SK-N-SH (cell line): ENCODE measurements at regions of chr7 and their contacts with region 1.

Region 1: DNA sequence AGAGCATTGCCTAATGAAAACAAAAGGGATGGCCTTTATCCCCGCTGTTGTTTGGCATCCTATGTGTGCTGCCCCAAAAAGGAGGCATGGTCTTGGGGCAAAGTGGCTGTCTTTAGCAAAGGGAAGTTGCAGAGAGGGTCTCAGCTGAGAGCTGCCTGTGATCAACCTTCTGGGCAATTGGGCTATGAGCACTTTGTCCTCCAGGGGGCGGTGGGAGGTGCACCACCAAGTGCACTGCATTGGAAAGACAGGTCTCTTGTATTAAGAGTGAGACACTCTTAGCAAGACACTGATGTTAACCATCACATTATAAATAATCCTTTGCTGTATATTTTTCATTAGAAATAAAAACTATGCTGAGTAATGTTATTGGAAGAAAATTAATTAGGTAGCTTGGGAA is 314.8 kb downstream of the POM121L12 start:
- DNase-seq: peak; percentile 38
- H3K4me3 ChIP-seq: no peak overlapping the region
- H3K27ac ChIP-seq: no peak overlapping the region
- H3K4me1 ChIP-seq: no peaks in the 10 kb centered on the region; a peak in 2 of 4 replicates
- H3K27me3 ChIP-seq: no peaks in the 10 kb centered on the region
- CTCF ChIP-seq: peak; percentile 38
- EP300 ChIP-seq: no peak
- RAD21 ChIP-seq: peak; percentile 81

Region 2: DNA sequence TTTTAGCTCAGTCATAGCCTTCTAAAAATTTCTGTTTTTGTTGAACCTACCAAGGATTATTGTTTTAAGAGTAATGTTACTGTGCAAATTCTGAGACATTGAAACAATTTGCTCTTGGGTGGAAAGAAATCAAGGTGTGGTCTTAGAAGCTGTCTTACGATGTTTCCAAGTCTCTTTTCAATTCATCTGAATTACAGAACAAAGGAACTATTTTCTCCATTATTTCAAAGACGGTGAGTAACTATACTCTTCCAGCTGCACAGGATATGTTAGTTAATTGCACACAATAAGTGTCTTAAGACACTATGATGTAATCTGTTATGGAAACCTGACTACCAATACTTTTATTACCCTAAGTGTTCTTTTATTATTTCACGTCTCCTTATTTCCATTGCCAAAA is 421.6 kb before region 1 on chr7:
- CTCF ChIA-PET with region 1: no interaction called
- POLR2A ChIA-PET with region 1: no interaction called
- DNase-seq: no peak
- H3K4me3 ChIP-seq: no peak overlapping the region
- H3K27ac ChIP-seq: no peak overlapping the region
- H3K4me1 ChIP-seq: no peaks in the 10 kb centered on the region
- H3K27me3 ChIP-seq: no peaks in the 10 kb centered on the region
- CTCF ChIP-seq: no peak
- EP300 ChIP-seq: no peak
- RAD21 ChIP-seq: no peak

Region 3: DNA sequence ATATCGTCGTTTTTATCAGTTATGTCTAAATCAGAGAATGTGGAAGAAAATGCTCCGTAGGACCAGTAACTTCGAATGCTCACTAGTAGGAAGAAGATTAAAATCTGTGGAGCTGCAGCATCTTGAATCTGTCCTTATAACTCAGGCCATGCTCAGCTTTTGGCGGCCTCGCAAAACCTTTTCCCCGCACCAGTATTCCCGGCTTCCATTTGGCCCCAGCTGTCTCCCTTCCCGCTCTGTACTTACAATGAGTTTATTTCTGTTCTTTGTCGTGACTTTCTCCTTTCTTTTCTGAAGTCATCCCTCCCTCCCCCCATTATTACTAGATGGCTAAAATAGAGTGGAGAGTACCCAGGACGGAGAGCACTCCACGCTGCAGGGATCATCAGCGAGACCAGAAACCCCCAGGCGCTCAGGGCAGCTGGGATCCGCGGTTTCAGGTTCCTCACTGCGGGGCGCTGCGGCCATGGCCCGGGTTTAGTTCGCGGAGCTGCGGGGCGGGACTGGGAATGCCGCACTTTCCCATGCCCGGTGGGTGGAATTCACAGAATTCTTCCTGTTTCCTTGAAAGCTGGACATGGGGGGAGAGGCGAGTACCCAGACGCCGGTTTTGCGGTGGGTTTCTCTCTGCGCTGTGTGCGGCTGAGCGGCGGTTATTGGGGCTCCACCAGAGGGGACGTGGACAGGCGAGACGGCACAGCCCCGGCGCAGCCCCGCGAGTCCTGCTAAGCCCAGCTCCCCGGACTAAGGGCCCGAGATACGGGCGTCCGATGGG is 131.3 kb before region 1 on chr7:
- CTCF ChIA-PET with region 1: no interaction called
- POLR2A ChIA-PET with region 1: no interaction called
- DNase-seq: peak; percentile 64
- H3K4me3 ChIP-seq: peak overlapping the region in 1 of 2 experiments; percentile 37; a peak in 1 of 4 replicates
- H3K27ac ChIP-seq: no peak overlapping the region
- H3K4me1 ChIP-seq: no peaks in the 10 kb centered on the region
- H3K27me3 ChIP-seq: no peaks in the 10 kb centered on the region
- CTCF ChIP-seq: no peak
- EP300 ChIP-seq: no peak
- RAD21 ChIP-seq: peak; percentile 11; the same call in 1 of the 2 replicates

Region 4: DNA sequence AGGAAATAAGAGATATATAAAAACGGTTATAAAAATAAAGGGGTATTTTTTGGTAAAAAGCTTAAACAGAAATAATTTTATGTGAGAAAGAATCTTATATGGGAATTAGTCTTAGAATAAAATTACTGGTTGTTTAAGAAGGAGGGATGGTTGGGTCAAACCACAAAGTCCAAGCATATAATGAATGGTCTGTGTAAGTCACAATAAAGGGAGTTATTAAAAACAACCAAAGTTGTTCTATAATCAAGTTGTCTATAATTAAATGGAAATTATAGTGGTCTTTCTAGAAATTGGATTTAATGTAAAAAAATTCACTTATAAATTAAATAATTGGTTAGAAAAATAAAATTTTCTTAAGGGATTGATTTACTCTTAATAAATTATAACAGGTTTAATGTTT is 10.0 kb before region 1 on chr7:
- CTCF ChIA-PET with region 1: interaction called, 11 read pairs
- POLR2A ChIA-PET with region 1: no interaction called
- DNase-seq: no peak
- H3K4me3 ChIP-seq: no peak overlapping the region
- H3K27ac ChIP-seq: no peak overlapping the region
- H3K4me1 ChIP-seq: no peaks in the 10 kb centered on the region
- H3K27me3 ChIP-seq: no peaks in the 10 kb centered on the region
- CTCF ChIP-seq: no peak
- EP300 ChIP-seq: no peak
- RAD21 ChIP-seq: no peak

Region 5: GRCh38 chr7:53366316-53366715 is 16.1 kb after region 1 on chr7:
- CTCF ChIA-PET with region 1: interaction called, 10 read pairs
- POLR2A ChIA-PET with region 1: no interaction called
- DNase-seq: no peak
- H3K4me3 ChIP-seq: no peak overlapping the region
- H3K27ac ChIP-seq: no peak overlapping the region
- H3K4me1 ChIP-seq: no peaks in the 10 kb centered on the region
- H3K27me3 ChIP-seq: no peaks in the 10 kb centered on the region
- CTCF ChIP-seq: no peak
- EP300 ChIP-seq: no peak
- RAD21 ChIP-seq: no peak

Region 6: DNA sequence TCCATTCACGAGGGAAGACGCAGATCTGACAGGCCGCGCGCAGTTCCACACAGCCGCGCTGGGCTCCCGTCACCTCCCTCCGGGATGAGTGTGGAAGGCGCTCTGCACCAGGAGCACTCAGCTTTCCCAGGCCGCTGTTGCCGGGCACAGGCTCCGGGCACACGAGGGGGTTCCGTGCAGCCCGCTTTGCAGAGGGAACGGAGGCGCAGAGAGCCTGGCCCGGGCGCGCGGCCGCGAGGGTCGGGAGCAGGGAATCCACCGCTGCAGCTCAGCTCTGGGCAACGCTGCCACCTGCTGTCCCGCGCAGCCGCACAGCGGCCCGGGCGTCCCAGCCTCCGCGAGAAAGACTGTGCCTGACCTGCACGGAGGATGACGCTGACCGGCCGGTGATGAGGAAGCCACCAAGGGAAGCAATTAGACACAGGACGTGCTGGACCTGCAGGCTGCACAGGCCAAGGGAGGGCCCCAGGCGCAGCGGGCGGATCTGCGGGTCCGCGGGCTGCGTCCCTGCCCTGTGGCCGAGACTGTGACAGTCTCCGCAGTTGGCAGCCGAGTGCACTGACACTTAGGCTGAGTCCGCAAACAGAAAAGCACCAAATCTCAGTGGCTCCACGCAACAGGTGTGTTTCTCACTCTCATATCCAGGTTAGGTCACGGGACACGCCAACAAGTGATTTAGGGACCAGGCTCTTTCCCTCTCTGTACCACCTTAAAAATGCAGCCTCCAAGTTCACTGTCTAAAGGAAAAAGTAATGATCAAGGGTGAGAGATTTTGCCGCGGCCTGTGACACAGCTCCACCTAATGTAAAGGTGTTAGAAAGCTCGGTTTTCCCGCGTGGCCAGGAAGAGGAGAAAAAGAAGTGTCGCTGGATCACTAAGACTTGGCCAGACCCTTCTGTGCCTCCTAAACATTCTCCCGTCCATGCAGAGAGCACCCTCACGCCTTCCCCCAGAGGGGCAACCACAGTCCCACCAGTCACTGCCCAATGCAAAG is 1314.3 kb after region 1 on chr7:
- CTCF ChIA-PET with region 1: interaction called, 12 read pairs
- POLR2A ChIA-PET with region 1: no interaction called
- DNase-seq: peak; percentile 97
- H3K4me3 ChIP-seq: peak overlapping the region; percentile 53 to 58
- H3K27ac ChIP-seq: no peak overlapping the region; a peak in 1 of 4 replicates
- H3K4me1 ChIP-seq: peaks cover 0 to 11% of the 10 kb centered on the region in 2 experiments; a peak in 1 of 4 replicates
- H3K27me3 ChIP-seq: peaks cover 24% of the 10 kb centered on the region
- CTCF ChIP-seq: peak; percentile 46
- EP300 ChIP-seq: no peak
- RAD21 ChIP-seq: peak; percentile 87